WTC11 (cell line): ENCODE measurements at regions of chr9 and their contacts with region 1.

Region 1: GRCh38 chr9:88991066-88992034 is at the start of gene S1PR3:
- DNase-seq: peak; percentile 78
- ATAC-seq: peak; percentile 62
- H3K4me3 Mint-ChIP-seq: peak within 1 kb of the TSS; percentile 91
- H3K27ac Mint-ChIP-seq: 0 out of 2 replicates have a peak within 1 kb of the TSS, but pooled peaks have one; percentile 36
- H3K4me1 Mint-ChIP-seq: peaks cover 34% of the 10 kb centered on the region
- H3K27me3 Mint-ChIP-seq: peaks cover 18% of the 10 kb centered on the region
- CTCF ChIP-seq: no peak
- total RNA-seq, gene S1PR3: 5.9 to 7.1 TPM (median 6.3 TPM) in 3 replicates

Region 2: DNA sequence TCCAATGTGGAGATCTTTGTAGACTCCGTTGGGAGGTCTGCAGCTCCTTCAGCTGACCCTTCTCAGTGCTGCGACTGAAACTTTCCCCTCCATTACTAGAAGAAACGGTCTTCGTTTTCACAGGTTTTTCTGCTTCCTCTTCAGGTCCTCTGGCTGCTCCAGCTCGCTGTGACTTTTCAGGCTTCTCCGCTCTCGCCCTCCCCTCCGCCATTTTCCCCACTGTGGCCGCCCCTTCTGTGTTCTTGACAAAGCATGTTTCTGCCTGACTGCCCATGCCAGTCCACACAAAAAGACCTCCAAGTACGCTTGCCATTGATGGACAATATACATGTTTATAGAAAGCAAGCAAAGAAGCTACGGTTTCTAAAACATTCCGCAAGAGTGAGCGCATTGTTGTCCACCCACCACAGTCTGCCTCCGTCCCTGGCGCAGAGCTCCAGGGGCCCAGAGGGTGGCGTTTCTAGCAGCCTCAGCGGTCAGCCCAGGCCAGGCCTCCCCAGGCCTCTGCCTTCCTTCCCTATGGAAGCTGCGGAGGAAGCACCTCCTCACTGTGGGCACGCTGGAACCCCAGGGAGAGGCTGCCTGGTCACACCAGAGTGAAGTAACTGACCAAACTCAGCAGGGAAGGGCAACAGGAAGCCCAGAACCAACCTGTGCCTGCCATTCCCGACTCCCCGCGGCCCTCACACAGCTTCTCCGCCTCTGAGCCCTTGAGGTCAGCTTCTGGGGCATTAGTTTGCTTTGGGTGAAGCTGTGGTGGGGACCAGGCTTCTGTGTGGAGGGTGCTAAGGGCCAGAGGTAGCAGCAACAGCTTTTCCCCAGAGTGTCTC is 20.0 kb before region 1 on chr9:
- CTCF ChIA-PET with region 1: interaction called, 11 read pairs
- POLR2A ChIA-PET with region 1: no interaction called
- DNase-seq: no peak
- ATAC-seq: peak; percentile 41
- H3K4me3 Mint-ChIP-seq: no peak overlapping the region
- H3K27ac Mint-ChIP-seq: no peak overlapping the region
- H3K4me1 Mint-ChIP-seq: peaks cover 16% of the 10 kb centered on the region
- H3K27me3 Mint-ChIP-seq: no peaks in the 10 kb centered on the region
- CTCF ChIP-seq: no peak